ENCODE measurements at regions of chr15 and their contacts with region 1.

Region 1: DNA sequence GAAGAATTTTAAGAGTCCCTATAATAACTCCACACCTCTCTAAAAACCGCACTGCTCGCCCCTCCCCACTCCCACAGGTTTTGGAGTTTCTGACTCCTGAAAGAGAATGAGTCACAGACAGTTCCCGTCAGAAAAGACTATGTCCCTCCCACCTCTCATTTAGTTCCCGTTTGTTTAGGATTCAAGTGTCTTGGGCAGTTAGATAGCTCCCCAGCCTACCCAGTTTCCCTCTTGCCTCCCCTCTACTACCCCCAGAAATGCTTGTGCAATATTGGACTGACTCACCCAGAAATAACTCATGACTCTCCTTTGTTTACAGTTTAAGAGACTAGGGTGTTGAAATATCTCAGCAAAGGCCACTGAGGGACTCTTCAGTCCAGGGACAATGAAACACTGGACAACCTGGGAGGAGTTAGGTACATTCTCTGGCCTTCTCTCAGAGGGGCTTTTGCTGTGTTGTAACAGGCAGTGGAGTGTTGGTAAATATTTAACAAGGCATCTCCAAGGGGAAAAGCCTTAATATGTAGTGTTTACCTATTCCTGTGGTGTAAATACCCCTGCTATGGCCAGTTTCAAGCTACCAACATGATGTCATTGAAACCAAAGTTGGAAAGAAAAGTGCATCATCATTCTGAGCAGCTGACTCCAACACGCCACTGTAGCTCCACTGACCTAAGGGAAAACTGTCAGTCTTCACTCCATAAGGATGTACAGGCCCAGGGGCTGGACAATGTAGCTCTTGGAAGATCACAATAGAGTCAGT is 96.1 kb upstream of the CHD2 start:
- DNase-seq: peak; percentile 99 to 100 (median 100)
- H3K4me3 ChIP-seq: peak overlapping the region in 1 of 3 experiments; percentile 6
- H3K4me3 Mint-ChIP-seq: peak overlapping the region; percentile 34 to 42
- H3K27ac ChIP-seq: peak overlapping the region; percentile 96 to 100
- H3K27ac Mint-ChIP-seq: peak overlapping the region; percentile 99 to 100 (median 99)
- H3K4me1 ChIP-seq: peaks cover 70 to 86% of the 10 kb centered on the region in 2 donors
- H3K4me1 Mint-ChIP-seq: peaks cover 66% of the 10 kb centered on the region
- H3K27me3 ChIP-seq: no peaks in the 10 kb centered on the region
- H3K27me3 Mint-ChIP-seq: peaks cover 0 to 2% (median 0%) of the 10 kb centered on the region in 3 donors
- CTCF ChIP-seq: no peak

Region 2: GRCh38 chr15:92625251-92625980 is 178.6 kb before region 1 on chr15:
- intact Hi-C with region 1: no loop called
- DNase-seq: no peak
- H3K4me3 ChIP-seq: no peak overlapping the region
- H3K4me3 Mint-ChIP-seq: no peak overlapping the region
- H3K27ac ChIP-seq: no peak overlapping the region
- H3K27ac Mint-ChIP-seq: no peak overlapping the region
- H3K4me1 ChIP-seq: no peaks in the 10 kb centered on the region
- H3K4me1 Mint-ChIP-seq: no peaks in the 10 kb centered on the region
- H3K27me3 ChIP-seq: no peaks in the 10 kb centered on the region
- H3K27me3 Mint-ChIP-seq: peaks cover 0 to 2% (median 0%) of the 10 kb centered on the region in 3 donors
- CTCF ChIP-seq: no peak

Region 3: GRCh38 chr15:92917606-92918407 is 113.8 kb after region 1 on chr15:
- intact Hi-C with region 1: loop called (anchors 5 kb)
- DNase-seq: peak; percentile 88 to 96 (median 92)
- H3K4me3 ChIP-seq: peak overlapping the region in 1 of 3 experiments; percentile 38
- H3K4me3 Mint-ChIP-seq: peak overlapping the region in 1 of 2 donors; percentile 53
- H3K27ac ChIP-seq: peak overlapping the region; percentile 42 to 83
- H3K27ac Mint-ChIP-seq: peak overlapping the region; percentile 86 to 93 (median 88)
- H3K4me1 ChIP-seq: peaks cover 67 to 89% of the 10 kb centered on the region in 2 donors
- H3K4me1 Mint-ChIP-seq: peaks cover 76% of the 10 kb centered on the region
- H3K27me3 ChIP-seq: no peaks in the 10 kb centered on the region
- H3K27me3 Mint-ChIP-seq: no peaks in the 10 kb centered on the region
- CTCF ChIP-seq: peak; percentile 90

Measured in CD14-positive monocyte (primary cell).